ENCODE measurements at regions of chr3 and their contacts with region 1.

Region 1: GRCh38 chr3:150681057-150681456 is 22.7 kb downstream of the ERICH6 start:
- DNase-seq: no peak
- ATAC-seq: no peak
- H3K4me3 ChIP-seq: no peak overlapping the region
- H3K27ac ChIP-seq: no peak overlapping the region
- H3K4me1 ChIP-seq: no peaks in the 10 kb centered on the region
- CTCF ChIP-seq: no peak
- EP300 ChIP-seq: no peak
- POLR2A ChIP-seq: no peak
- RAD21 ChIP-seq: no peak

Region 2: GRCh38 chr3:150635526-150635925 is 45.5 kb before region 1 on chr3:
- CTCF ChIA-PET with region 1: no interaction called
- POLR2A ChIA-PET with region 1: no interaction called
- DNase-seq: no peak
- ATAC-seq: no peak
- H3K4me3 ChIP-seq: no peak overlapping the region
- H3K27ac ChIP-seq: no peak overlapping the region
- H3K4me1 ChIP-seq: no peaks in the 10 kb centered on the region
- CTCF ChIP-seq: no peak
- EP300 ChIP-seq: no peak
- POLR2A ChIP-seq: no peak
- RAD21 ChIP-seq: no peak

Region 3: GRCh38 chr3:150747921-150748643 is 67.0 kb after region 1 on chr3:
- CTCF ChIA-PET with region 1: no interaction called
- POLR2A ChIA-PET with region 1: interaction called, 10 read pairs
- DNase-seq: no peak
- ATAC-seq: no peak
- H3K4me3 ChIP-seq: no peak overlapping the region
- H3K27ac ChIP-seq: no peak overlapping the region
- H3K4me1 ChIP-seq: peaks cover 45% of the 10 kb centered on the region
- CTCF ChIP-seq: no peak
- EP300 ChIP-seq: no peak
- POLR2A ChIP-seq: no peak
- RAD21 ChIP-seq: no peak

Measured in A549 (cell line).